ENCODE measurements at regions of chr18 and their contacts with region 1.

Region 1: DNA sequence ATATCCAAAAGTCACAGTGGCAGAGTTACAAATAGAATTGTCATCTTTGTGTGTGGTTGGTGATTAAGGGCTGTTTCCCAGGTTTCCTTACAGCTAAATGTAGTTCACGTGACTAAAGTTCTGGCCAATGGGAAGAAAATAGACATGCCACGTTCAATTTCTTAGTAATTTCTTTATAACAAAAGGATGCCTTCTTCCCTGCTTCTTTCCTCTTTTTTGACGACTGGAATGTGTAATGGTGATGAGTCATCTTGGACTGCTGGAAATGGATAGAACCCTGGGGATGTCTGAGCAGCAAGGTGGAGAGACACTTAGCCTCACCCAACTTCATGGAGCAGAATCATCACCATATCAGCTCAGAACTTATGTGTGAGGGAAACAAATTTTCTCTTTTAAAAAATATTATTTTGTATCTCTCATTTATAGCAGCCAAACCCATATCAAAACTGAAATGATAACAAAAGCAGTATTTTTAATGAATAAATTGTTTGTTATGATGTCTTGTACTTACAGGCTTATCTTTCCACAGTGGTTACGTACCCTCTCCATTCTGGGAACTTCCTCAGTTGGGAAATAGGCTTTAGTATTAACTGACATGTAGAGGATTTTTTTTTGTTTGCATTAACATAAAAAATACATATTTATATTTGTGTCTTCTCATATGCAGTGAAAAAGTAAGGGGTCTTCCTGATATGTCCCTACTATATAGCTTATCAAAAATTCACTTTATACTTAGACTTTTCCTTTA is 91.1 kb upstream of the CDH2 start:
- DNase-seq: no peak
- ATAC-seq: no peak
- H3K4me3 ChIP-seq: no peak overlapping the region
- H3K27ac ChIP-seq: no peak overlapping the region
- H3K4me1 ChIP-seq: no peaks in the 10 kb centered on the region
- H3K27me3 ChIP-seq: no peaks in the 10 kb centered on the region
- CTCF ChIP-seq: no peak
- POLR2A ChIP-seq: no peak

Region 2: DNA sequence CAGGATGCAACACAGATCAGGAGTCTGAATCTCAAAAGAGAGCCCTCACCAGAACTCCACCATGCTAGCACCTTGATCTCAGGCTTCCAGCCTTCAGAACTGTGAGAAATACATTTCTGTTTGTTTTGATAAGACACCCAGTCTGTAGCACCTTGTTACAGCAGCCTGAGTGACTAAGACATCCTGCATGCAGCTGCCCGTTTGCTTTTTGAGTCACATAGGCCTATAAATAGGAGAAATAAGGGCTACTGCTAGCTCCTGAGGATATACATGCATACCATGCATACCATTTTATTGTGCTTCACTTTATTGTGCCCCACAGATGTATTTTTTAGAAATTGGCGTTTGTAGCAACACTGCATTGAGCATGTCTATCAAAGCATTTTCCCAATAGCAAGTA is 428.9 kb before region 1 on chr18:
- intact Hi-C with region 1: no loop called
- DNase-seq: no peak
- ATAC-seq: no peak
- H3K4me3 ChIP-seq: no peak overlapping the region
- H3K27ac ChIP-seq: no peak overlapping the region
- H3K4me1 ChIP-seq: no peaks in the 10 kb centered on the region
- H3K27me3 ChIP-seq: no peaks in the 10 kb centered on the region
- CTCF ChIP-seq: no peak
- POLR2A ChIP-seq: no peak

Region 3: DNA sequence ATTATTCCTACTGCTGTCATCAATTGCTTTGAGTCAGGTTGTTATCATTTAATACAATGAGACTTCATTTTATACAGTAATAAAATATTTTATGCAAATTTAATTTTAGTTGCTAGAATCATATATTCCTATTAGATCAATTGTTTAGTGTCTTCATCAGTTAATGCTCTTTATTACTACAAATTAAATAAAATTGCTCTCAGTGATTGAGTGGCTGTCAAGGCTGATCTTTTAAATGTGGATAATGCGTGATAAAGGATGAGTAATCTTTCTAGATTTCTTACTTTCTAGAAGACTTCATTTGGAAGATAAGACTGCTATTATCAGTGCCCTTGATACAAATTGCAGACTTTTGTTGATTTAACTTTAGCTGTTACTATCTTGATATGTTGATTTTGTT is 31.6 kb before region 1 on chr18:
- intact Hi-C with region 1: loop called in 1 of 10 experiments (anchors 2 kb)
- DNase-seq: no peak
- ATAC-seq: no peak
- H3K4me3 ChIP-seq: no peak overlapping the region
- H3K27ac ChIP-seq: no peak overlapping the region
- H3K4me1 ChIP-seq: no peaks in the 10 kb centered on the region
- H3K27me3 ChIP-seq: no peaks in the 10 kb centered on the region
- CTCF ChIP-seq: no peak
- POLR2A ChIP-seq: no peak